Ascending aorta (tissue), 2 donors: ENCODE measurements at regions of chr2 and their contacts with region 1.

Region 1: DNA sequence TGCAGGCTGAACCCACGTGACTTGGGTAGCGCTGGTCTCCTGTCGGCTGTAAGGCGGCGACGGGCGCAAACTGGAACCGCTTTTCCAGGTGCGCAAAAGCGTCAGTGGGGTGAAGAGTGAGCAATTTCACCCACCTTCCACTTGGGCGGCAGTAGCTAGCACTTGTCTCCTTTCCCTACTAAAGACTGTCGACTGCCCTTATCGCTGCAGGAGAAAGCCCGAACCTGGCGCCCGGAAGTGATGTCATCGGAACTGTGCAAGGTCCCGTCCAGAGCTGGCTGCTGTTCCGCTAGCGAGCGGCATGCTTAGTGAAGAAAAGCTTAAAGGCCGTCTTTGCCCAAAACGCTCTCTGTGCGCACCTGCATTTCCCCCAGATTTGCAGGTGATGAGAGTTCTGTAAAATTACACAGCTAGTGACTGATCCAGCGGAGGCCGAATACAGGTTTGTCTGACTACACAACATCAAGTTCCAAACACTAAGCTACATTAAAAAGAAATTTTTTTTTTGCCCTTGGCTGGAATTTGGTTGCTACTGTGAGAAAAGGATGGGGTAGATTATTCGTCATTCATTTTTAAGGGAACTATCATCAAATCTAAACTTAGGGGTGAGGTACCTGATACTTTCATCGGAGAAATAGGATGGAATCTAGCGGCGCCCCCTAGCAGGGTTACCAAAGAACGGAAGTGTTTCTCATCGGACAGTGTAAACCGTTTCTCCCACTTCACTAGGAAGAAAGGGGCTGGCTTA is at the start of gene OSGEPL1:
- DNase-seq: peak; percentile 68 to 95
- H3K4me3 ChIP-seq: peak within 1 kb of the TSS; percentile 71 to 96
- H3K27ac ChIP-seq: peak within 1 kb of the TSS; percentile 77 to 79
- H3K4me1 ChIP-seq: peaks cover 6 to 13% of the 10 kb centered on the region in 2 donors
- H3K27me3 ChIP-seq: no peaks in the 10 kb centered on the region
- CTCF ChIP-seq: peak; percentile 16 to 48 (median 40)
- total RNA-seq, gene OSGEPL1: not detected

Region 2: GRCh38 chr2:189783927-189784867 is 21.5 kb after region 1 on chr2 and contains the starts of genes ORMDL1 and PMS1:
- intact Hi-C with region 1: loop called (anchors 1 kb)
- DNase-seq: peak; percentile 73 to 97
- H3K4me3 ChIP-seq: peak within 1 kb of the TSS; percentile 81 to 91
- H3K27ac ChIP-seq: peak within 1 kb of the TSS; percentile 95 to 96
- H3K4me1 ChIP-seq: peaks cover 15 to 24% of the 10 kb centered on the region in 2 donors
- H3K27me3 ChIP-seq: no peaks in the 10 kb centered on the region
- CTCF ChIP-seq: no peak
- total RNA-seq, gene ORMDL1: 68.6 TPM
- total RNA-seq, gene PMS1: 8.7 TPM

Region 3: DNA sequence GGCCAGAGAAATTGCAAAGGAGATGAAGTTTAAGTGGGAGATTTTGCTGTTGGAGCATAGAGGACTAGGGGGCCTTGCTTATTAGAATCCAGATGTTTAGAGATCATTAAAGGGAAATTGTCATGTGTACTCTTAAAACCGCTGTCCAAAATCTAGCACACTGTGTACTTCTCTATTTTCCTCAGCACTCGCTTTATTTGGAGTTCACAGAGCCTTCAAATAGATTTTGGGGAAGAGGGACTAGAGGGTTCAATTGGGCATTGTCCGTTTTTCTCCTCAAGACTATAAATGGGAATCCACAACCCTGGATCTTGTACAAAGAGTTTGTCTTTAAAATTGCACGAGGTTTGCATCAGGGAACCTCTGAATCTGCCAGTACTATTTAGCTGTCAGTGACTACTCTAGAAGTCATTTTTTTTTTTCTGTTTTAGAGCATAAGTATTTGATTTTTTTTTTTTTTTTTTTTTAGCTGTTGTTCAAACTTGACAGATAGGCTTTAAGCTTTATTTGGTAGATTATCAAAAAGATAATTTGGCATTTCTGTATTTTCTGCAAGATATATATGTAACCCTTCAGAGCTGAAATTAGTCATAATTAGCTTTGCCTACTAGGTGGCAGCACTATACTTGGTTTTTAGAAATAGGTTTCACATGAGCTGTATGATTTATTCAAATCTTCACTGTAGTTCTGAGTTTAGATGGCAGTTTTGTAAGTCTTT is 35.7 kb after region 1 on chr2:
- intact Hi-C with region 1: no loop called
- DNase-seq: no peak
- H3K4me3 ChIP-seq: no peak overlapping the region
- H3K27ac ChIP-seq: no peak overlapping the region
- H3K4me1 ChIP-seq: no peaks in the 10 kb centered on the region
- H3K27me3 ChIP-seq: no peaks in the 10 kb centered on the region
- CTCF ChIP-seq: peak in 2 of 3 experiments; percentile 29 to 40